ENCODE measurements at regions of chr6 and their contacts with region 1.

Region 1: GRCh38 chr6:43395776-43396175 is 26.3 kb upstream of the ZNF318 start:
- DNase-seq: no peak
- H3K4me3 ChIP-seq: no peak overlapping the region
- H3K4me3 Mint-ChIP-seq: no peak overlapping the region
- H3K27ac ChIP-seq: no peak overlapping the region
- H3K27ac Mint-ChIP-seq: peak overlapping the region in 1 of 8 donors; percentile 53
- H3K4me1 ChIP-seq: peaks cover 19% of the 10 kb centered on the region
- H3K4me1 Mint-ChIP-seq: peaks cover 27 to 30% (median 29%) of the 10 kb centered on the region in 3 donors
- H3K27me3 ChIP-seq: no peaks in the 10 kb centered on the region
- H3K27me3 Mint-ChIP-seq: peaks cover 0 to 10% of the 10 kb centered on the region in 2 donors

Region 2: GRCh38 chr6:43263314-43264178 is 132.2 kb before region 1 on chr6:
- CTCF ChIA-PET with region 1: interaction called, 18 read pairs
- POLR2A ChIA-PET with region 1: interaction called, 5 read pairs
- DNase-seq: peak; percentile 52 to 81 (median 61)
- H3K4me3 ChIP-seq: no peak overlapping the region
- H3K4me3 Mint-ChIP-seq: no peak overlapping the region
- H3K27ac ChIP-seq: no peak overlapping the region
- H3K27ac Mint-ChIP-seq: peak overlapping the region in 1 of 8 donors; percentile 15
- H3K4me1 ChIP-seq: no peaks in the 10 kb centered on the region
- H3K4me1 Mint-ChIP-seq: peaks cover 0 to 3% (median 3%) of the 10 kb centered on the region in 3 donors
- H3K27me3 ChIP-seq: no peaks in the 10 kb centered on the region
- H3K27me3 Mint-ChIP-seq: peaks cover 0 to 4% of the 10 kb centered on the region in 2 donors

Region 3: DNA sequence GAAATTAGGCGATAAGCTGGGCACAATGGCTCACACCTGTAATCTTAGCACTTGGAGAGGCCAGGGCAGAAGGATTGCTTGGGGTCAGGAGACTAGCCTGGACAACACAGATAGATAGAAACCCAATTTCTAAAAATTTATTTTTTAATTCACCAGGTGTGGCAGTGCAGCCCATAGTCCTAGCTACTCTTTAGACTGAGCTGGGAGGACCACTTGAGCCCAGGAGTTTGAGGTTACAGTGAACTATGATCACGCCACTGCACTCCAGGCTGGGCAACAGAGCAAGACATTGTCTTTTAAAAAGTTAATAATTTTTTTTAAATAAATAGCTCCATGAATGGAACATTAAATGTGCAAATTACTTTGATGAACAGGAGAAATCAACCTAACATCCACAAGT is 34.5 kb before region 1 on chr6:
- CTCF ChIA-PET with region 1: interaction called, 15 read pairs
- POLR2A ChIA-PET with region 1: no interaction called
- DNase-seq: no peak
- H3K4me3 ChIP-seq: no peak overlapping the region
- H3K4me3 Mint-ChIP-seq: no peak overlapping the region
- H3K27ac ChIP-seq: no peak overlapping the region
- H3K27ac Mint-ChIP-seq: peak overlapping the region in 1 of 8 donors; percentile 54
- H3K4me1 ChIP-seq: peaks cover 5% of the 10 kb centered on the region
- H3K4me1 Mint-ChIP-seq: peaks cover 22 to 58% (median 41%) of the 10 kb centered on the region in 3 donors
- H3K27me3 ChIP-seq: no peaks in the 10 kb centered on the region
- H3K27me3 Mint-ChIP-seq: no peaks in the 10 kb centered on the region

Region 4: DNA sequence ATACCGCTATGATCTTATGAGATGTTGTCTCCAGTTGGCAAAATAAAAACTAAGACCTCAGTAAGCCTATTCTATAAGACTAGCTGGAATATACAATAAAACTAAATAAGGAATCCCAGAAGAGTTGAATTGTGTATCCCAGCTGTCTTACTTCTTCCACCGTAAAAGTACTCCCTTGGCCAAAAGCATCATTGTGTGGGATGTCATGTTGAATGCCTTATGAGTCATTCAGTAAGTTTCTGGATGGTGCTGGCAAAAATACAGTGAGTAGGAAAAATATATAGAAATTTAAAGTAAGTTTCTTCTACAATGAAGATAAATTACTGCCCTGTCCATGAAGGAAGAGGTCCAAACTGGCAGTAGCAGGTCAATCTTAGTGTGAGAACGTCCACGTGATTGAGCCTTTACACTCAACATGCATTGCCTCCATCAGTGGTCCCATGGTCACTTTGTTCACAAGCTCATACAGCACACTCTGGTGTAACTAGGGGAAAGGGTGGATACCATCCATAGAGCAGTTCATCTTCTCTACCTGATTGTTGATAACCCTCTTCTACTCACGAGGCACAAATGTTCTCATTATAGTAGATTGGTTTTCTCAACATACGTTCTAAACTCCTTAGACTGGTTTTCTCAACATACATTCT is 12.6 kb before region 1 on chr6:
- CTCF ChIA-PET with region 1: interaction called, 30 read pairs
- POLR2A ChIA-PET with region 1: interaction called, 3 read pairs
- DNase-seq: no peak
- H3K4me3 ChIP-seq: peak overlapping the region; percentile 9
- H3K4me3 Mint-ChIP-seq: peak overlapping the region; percentile 12 to 89 (median 52)
- H3K27ac ChIP-seq: peak overlapping the region; percentile 35
- H3K27ac Mint-ChIP-seq: peak overlapping the region; percentile 80 to 95 (median 93)
- H3K4me1 ChIP-seq: peaks cover 46% of the 10 kb centered on the region
- H3K4me1 Mint-ChIP-seq: peaks cover 48 to 73% (median 70%) of the 10 kb centered on the region in 3 donors
- H3K27me3 ChIP-seq: no peaks in the 10 kb centered on the region
- H3K27me3 Mint-ChIP-seq: peaks cover 0 to 2% of the 10 kb centered on the region in 2 donors

Region 5: DNA sequence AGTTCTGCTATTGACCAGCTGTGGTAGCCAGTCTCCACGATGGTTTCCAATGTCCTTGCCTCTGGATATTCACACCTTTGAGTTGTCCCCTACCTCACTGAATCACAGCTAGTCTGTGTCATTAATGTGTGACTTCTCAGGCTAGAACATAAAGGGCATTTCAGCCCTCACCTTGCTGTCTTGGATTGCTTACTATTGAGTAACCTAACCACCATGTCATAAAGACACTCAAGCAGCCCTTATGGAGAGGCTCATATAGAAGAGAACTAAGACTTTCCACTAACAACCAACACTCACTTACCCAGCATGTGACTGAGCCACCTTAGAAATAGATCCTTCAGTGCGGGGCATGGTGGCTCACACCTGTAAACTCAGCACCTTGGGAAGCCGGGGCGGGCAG is 12.5 kb after region 1 on chr6:
- CTCF ChIA-PET with region 1: no interaction called
- POLR2A ChIA-PET with region 1: no interaction called
- DNase-seq: no peak
- H3K4me3 ChIP-seq: no peak overlapping the region
- H3K4me3 Mint-ChIP-seq: no peak overlapping the region
- H3K27ac ChIP-seq: no peak overlapping the region
- H3K27ac Mint-ChIP-seq: no peak overlapping the region
- H3K4me1 ChIP-seq: no peaks in the 10 kb centered on the region
- H3K4me1 Mint-ChIP-seq: no peaks in the 10 kb centered on the region
- H3K27me3 ChIP-seq: no peaks in the 10 kb centered on the region
- H3K27me3 Mint-ChIP-seq: peaks cover 11 to 39% of the 10 kb centered on the region in 2 donors

Region 6: DNA sequence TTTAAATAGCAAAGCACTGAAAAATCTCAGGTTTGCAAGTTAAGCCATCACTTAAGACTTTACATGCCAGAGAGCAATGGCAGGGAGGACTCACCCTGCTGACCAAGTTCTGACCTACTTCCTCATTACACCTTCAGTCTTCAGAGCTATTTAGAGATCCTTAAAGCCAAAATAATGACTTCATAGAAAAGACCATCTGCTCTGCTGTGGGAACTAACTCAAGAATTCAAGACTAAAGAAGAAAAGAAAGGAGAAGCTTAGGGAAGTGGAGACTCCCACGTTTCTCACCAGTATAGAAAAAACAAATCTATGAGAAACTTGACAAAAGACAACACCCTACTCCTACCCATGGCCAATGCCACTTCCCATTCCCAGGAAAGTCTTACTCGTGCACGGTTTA is 151.4 kb after region 1 on chr6:
- CTCF ChIA-PET with region 1: no interaction called
- POLR2A ChIA-PET with region 1: no interaction called
- DNase-seq: no peak
- H3K4me3 ChIP-seq: no peak overlapping the region
- H3K4me3 Mint-ChIP-seq: no peak overlapping the region
- H3K27ac ChIP-seq: no peak overlapping the region
- H3K27ac Mint-ChIP-seq: peak overlapping the region in 4 of 8 donors; percentile 20 to 48 (median 32)
- H3K4me1 ChIP-seq: no peaks in the 10 kb centered on the region
- H3K4me1 Mint-ChIP-seq: peaks cover 3 to 8% (median 8%) of the 10 kb centered on the region in 3 donors
- H3K27me3 ChIP-seq: no peaks in the 10 kb centered on the region
- H3K27me3 Mint-ChIP-seq: no peaks in the 10 kb centered on the region